Naive thymus-derived CD4-positive, alpha-beta T cell (primary cell): ENCODE measurements at regions of chrX and their contacts with region 1.

Region 1: DNA sequence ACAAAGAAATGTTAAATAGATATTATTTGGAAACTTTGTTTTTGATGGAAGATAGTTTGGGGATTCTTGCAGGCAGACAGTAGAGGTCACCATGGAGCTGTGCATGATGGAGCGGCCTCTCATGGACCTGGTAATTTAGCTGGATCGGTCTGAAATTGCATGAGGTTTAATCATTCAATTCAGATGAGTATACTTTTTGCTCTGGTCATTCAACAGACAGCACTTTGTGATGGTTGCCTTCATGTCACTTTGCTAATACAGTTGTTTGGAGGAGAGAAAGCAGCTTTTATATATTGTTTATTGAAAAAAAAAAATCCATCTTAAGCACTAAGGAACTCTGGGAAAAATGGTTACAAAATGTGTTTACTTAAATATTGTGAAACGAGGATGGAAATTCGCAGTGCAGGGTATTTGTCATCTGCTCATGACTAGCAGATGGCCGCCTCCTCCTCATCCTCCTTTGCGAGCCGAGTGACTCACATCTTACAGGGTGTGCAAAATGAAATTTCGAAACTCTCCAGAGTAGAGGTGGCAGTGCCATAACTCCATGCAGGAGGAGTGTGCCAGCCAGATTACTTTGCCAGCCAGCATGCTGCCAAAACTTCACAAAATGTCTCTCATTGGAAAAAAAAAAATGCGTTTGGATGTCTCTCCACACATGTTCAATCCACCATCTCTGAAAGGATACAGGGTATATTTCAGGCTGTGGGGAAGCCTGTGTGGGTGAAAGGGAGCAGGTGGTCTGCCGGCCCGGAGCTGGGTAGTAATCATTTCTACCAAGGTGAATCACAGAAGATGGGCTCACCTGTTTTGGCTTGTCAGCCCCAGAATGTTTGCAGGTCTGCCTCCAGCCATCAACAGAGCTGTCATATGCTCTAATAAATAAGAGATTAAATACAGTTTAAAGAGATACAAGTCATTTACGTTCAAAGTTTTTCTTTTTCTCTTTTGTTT is 314.9 kb upstream of the DIPK2B start:
- DNase-seq: peak in 6 of 9 donors; percentile 13 to 35 (median 20)
- ATAC-seq: peak; percentile 68
- H3K4me3 ChIP-seq: no peak overlapping the region
- H3K4me3 Mint-ChIP-seq: no peak overlapping the region
- H3K27ac ChIP-seq: no peak overlapping the region
- H3K27ac Mint-ChIP-seq: no peak overlapping the region
- H3K4me1 ChIP-seq: no peaks in the 10 kb centered on the region
- H3K4me1 Mint-ChIP-seq: peaks cover 0 to 11% (median 0%) of the 10 kb centered on the region in 7 donors
- H3K27me3 ChIP-seq: no peaks in the 10 kb centered on the region
- H3K27me3 Mint-ChIP-seq: peaks cover 0 to 5% (median 0%) of the 10 kb centered on the region in 5 donors

Region 2: DNA sequence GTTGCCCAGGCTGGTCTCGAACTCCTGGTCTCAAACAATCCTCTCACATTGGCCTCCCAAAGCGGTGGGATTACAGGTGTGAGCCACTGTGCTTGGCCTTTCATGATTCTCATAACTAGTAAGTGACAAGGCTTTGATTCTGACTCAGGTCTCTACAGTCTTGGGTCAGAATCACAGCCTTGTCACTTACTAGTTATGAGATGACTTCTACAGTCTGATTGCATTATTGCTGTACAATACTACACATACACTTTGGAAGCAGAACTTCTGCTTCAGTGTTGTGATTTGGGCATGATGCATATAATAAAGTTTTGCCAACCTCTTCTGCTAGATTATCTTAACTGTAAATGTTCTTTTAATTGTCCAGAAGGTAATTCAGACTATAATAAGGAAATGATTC is 519.3 kb before region 1 on chrX:
- CTCF ChIA-PET with region 1: no interaction called
- POLR2A ChIA-PET with region 1: no interaction called
- intact Hi-C with region 1: no loop called
- DNase-seq: no peak
- ATAC-seq: no peak
- H3K4me3 ChIP-seq: no peak overlapping the region
- H3K4me3 Mint-ChIP-seq: peak overlapping the region in 3 of 10 donors; percentile 11 to 66 (median 53)
- H3K27ac ChIP-seq: no peak overlapping the region
- H3K27ac Mint-ChIP-seq: peak overlapping the region in 2 of 9 donors; percentile 37 to 76
- H3K4me1 ChIP-seq: peaks cover 4 to 18% of the 10 kb centered on the region in 2 donors
- H3K4me1 Mint-ChIP-seq: peaks cover 31 to 92% (median 64%) of the 10 kb centered on the region in 7 donors
- H3K27me3 ChIP-seq: no peaks in the 10 kb centered on the region
- H3K27me3 Mint-ChIP-seq: no peaks in the 10 kb centered on the region

Region 3: GRCh38 chrX:45749375-45749774 is 233.8 kb after region 1 on chrX:
- CTCF ChIA-PET with region 1: no interaction called
- POLR2A ChIA-PET with region 1: no interaction called
- intact Hi-C with region 1: loop called in 1 of 2 experiments (anchors 1 kb)
- DNase-seq: peak in 1 of 9 donors; percentile 33
- ATAC-seq: peak; percentile 59
- H3K4me3 ChIP-seq: no peak overlapping the region
- H3K4me3 Mint-ChIP-seq: peak overlapping the region in 1 of 10 donors; percentile 26
- H3K27ac ChIP-seq: no peak overlapping the region
- H3K27ac Mint-ChIP-seq: peak overlapping the region in 5 of 9 donors; percentile 19 to 48 (median 28)
- H3K4me1 ChIP-seq: peaks cover 17 to 32% of the 10 kb centered on the region in 2 donors
- H3K4me1 Mint-ChIP-seq: peaks cover 0 to 29% (median 8%) of the 10 kb centered on the region in 7 donors
- H3K27me3 ChIP-seq: no peaks in the 10 kb centered on the region
- H3K27me3 Mint-ChIP-seq: no peaks in the 10 kb centered on the region

Region 4: DNA sequence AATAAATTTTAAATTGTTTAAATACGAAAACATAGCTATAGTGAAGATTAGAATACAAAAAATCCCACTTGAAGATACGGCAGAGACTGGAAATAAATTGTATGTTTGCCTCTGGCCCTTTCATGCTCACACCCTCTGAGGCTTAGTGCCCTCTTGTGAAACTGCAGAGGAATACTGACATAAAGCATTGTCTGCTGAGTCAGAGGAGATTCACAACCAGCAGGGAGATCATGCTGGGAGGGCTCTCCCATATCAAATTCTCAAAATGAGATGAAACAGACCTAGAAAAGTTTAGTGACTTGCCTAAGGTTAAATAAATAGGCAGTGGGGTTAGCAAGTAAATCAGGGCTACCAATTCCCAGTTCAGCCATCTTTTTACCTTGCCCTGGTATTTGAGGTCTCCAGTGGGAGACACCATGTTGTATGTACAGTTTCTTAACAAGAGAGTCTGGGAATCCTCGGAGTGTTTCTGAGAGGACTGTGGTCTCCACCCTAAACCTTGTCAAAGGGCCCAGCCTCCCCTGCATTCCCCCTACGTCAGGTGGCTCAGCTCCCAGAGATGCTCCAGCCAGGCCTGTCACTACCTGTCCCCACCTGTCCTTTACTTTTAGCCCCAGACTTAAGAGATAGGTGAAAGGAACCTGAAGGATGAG is 266.5 kb after region 1 on chrX:
- CTCF ChIA-PET with region 1: no interaction called
- POLR2A ChIA-PET with region 1: no interaction called
- intact Hi-C with region 1: loop called in 1 of 2 experiments (anchors 1 kb)
- DNase-seq: no peak
- ATAC-seq: peak; percentile 37
- H3K4me3 ChIP-seq: no peak overlapping the region
- H3K4me3 Mint-ChIP-seq: no peak overlapping the region
- H3K27ac ChIP-seq: no peak overlapping the region
- H3K27ac Mint-ChIP-seq: peak overlapping the region in 1 of 9 donors; percentile 62
- H3K4me1 ChIP-seq: no peaks in the 10 kb centered on the region
- H3K4me1 Mint-ChIP-seq: peaks cover 0 to 73% (median 4%) of the 10 kb centered on the region in 7 donors
- H3K27me3 ChIP-seq: no peaks in the 10 kb centered on the region
- H3K27me3 Mint-ChIP-seq: no peaks in the 10 kb centered on the region

Region 5: DNA sequence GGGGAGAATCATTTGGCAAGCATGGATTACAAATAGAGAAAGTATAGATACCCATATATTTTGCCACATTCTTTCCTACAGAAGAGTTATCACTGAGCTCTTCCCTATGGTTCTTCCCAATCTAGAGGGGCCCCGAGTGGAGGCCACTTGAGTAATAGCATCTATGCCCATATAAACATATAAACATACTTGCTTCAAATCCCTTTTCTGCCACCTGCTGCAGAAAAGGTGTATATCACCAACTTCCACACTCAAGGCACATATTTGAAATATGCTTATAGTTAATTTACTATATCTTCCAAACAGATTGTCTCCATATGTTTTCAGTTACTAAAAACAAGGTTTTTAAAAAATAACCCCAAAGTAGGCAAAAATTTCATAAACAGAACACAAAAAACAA is 328.0 kb after region 1 on chrX:
- CTCF ChIA-PET with region 1: no interaction called
- POLR2A ChIA-PET with region 1: no interaction called
- intact Hi-C with region 1: loop called in 1 of 2 experiments (anchors 1 kb)
- DNase-seq: peak in 4 of 9 donors; percentile 4 to 23 (median 16)
- ATAC-seq: no peak
- H3K4me3 ChIP-seq: no peak overlapping the region
- H3K4me3 Mint-ChIP-seq: peak overlapping the region in 1 of 10 donors; percentile 40
- H3K27ac ChIP-seq: no peak overlapping the region
- H3K27ac Mint-ChIP-seq: peak overlapping the region in 2 of 9 donors; percentile 10 to 51
- H3K4me1 ChIP-seq: no peaks in the 10 kb centered on the region
- H3K4me1 Mint-ChIP-seq: peaks cover 0 to 52% (median 9%) of the 10 kb centered on the region in 7 donors
- H3K27me3 ChIP-seq: no peaks in the 10 kb centered on the region
- H3K27me3 Mint-ChIP-seq: no peaks in the 10 kb centered on the region

Region 6: GRCh38 chrX:46376246-46376885 is 860.8 kb after region 1 on chrX:
- CTCF ChIA-PET with region 1: interaction called, 3 read pairs
- POLR2A ChIA-PET with region 1: no interaction called
- intact Hi-C with region 1: loop called (anchors 1 to 5 kb)
- DNase-seq: peak in 4 of 9 donors; percentile 18 to 31 (median 24)
- ATAC-seq: no peak
- H3K4me3 ChIP-seq: no peak overlapping the region
- H3K4me3 Mint-ChIP-seq: no peak overlapping the region
- H3K27ac ChIP-seq: no peak overlapping the region
- H3K27ac Mint-ChIP-seq: no peak overlapping the region
- H3K4me1 ChIP-seq: no peaks in the 10 kb centered on the region
- H3K4me1 Mint-ChIP-seq: peaks cover 0 to 4% (median 0%) of the 10 kb centered on the region in 7 donors
- H3K27me3 ChIP-seq: no peaks in the 10 kb centered on the region
- H3K27me3 Mint-ChIP-seq: peaks cover 0 to 7% (median 0%) of the 10 kb centered on the region in 5 donors

Region 7: GRCh38 chrX:46408553-46409407 is 893.2 kb after region 1 on chrX:
- CTCF ChIA-PET with region 1: interaction called, 8 read pairs
- POLR2A ChIA-PET with region 1: no interaction called
- intact Hi-C with region 1: loop called in 1 of 2 experiments (anchors 2 kb)
- DNase-seq: peak; percentile 12 to 61 (median 38)
- ATAC-seq: peak; percentile 54
- H3K4me3 ChIP-seq: no peak overlapping the region
- H3K4me3 Mint-ChIP-seq: no peak overlapping the region
- H3K27ac ChIP-seq: no peak overlapping the region
- H3K27ac Mint-ChIP-seq: peak overlapping the region in 1 of 9 donors; percentile 59
- H3K4me1 ChIP-seq: no peaks in the 10 kb centered on the region
- H3K4me1 Mint-ChIP-seq: peaks cover 0 to 2% (median 0%) of the 10 kb centered on the region in 7 donors
- H3K27me3 ChIP-seq: no peaks in the 10 kb centered on the region
- H3K27me3 Mint-ChIP-seq: peaks cover 0 to 5% (median 0%) of the 10 kb centered on the region in 5 donors